Activated B cell treated with CpG ODN at 0.5 μM for 24 hours (primary cell): ENCODE measurements at regions of chr1 and their contacts with region 1.

Region 1: DNA sequence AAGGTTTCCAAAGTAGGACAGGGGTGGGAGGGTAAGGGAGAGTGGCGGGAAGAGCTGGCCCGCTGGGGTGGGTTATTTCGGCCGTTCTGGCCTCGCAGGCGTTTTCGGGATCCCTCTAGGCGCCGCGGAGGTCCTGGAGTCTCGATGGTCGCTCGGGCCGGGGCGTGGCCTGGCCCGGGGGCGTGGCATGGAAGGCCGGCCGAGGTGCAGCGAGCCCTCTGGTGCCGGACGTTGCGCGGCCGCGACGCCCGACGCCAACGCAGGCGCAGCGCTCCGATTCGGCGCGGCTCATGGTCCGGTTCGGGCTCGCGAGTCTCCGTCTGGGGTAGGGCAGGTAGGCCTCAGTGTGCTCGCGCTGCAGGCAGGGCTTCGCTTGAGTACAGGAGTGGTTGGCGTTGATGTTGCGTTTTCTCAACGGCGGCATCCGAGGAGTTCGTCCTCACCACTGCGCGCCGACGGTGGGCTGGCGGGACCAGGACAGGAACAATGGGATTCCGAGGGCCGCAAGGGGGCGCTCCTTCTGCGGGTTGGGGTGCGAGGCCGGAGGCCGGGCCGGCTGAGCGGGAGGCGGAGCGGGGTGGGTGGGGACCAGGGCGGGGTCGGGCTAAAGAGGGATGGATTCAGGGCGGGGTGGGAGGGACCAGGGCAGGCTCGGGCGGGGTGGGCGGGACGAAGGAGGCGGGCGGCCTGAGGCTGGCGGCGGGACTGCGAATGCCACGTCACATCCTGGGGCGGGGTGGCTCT is at the start of gene PGBD2:
- DNase-seq: peak; percentile 95
- ATAC-seq: peak; percentile 83
- H3K4me3 Mint-ChIP-seq: peak within 1 kb of the TSS; percentile 99
- H3K27ac Mint-ChIP-seq: peak within 1 kb of the TSS; percentile 99
- H3K4me1 Mint-ChIP-seq: peaks cover 46% of the 10 kb centered on the region
- H3K27me3 Mint-ChIP-seq: no peaks in the 10 kb centered on the region
- CTCF ChIP-seq: no peak
- total RNA-seq, gene PGBD2: 12.3 and 13.4 TPM in 2 replicates

Region 2: GRCh38 chr1:248858891-248859889 is 47.0 kb before region 1 on chr1 and contains the start of gene ZNF692:
- CTCF ChIA-PET with region 1: interaction called, 3 read pairs
- POLR2A ChIA-PET with region 1: interaction called, 27 read pairs
- intact Hi-C with region 1: loop called (anchors 1 kb)
- DNase-seq: peak; percentile 97
- ATAC-seq: peak; percentile 88
- H3K4me3 Mint-ChIP-seq: peak within 1 kb of the TSS; percentile 87
- H3K27ac Mint-ChIP-seq: peak within 1 kb of the TSS; percentile 97
- H3K4me1 Mint-ChIP-seq: peaks cover 55% of the 10 kb centered on the region
- H3K27me3 Mint-ChIP-seq: no peaks in the 10 kb centered on the region
- CTCF ChIP-seq: no peak
- total RNA-seq, gene ZNF692: 36.4 and 40.3 TPM in 2 replicates

Region 3: GRCh38 chr1:248873409-248873992 is 32.7 kb before region 1 on chr1:
- CTCF ChIA-PET with region 1: no interaction called
- POLR2A ChIA-PET with region 1: interaction called, 19 read pairs
- intact Hi-C with region 1: loop called (anchors 1 kb)
- DNase-seq: peak; percentile 91
- ATAC-seq: peak; percentile 80
- H3K4me3 Mint-ChIP-seq: peak overlapping the region; percentile 95
- H3K27ac Mint-ChIP-seq: peak overlapping the region; percentile 97
- H3K4me1 Mint-ChIP-seq: peaks cover 19% of the 10 kb centered on the region
- H3K27me3 Mint-ChIP-seq: peaks cover 8% of the 10 kb centered on the region
- CTCF ChIP-seq: no peak